Transverse colon (tissue), 4 donors: ENCODE measurements at regions of chr17 and their contacts with region 1.

Region 1: DNA sequence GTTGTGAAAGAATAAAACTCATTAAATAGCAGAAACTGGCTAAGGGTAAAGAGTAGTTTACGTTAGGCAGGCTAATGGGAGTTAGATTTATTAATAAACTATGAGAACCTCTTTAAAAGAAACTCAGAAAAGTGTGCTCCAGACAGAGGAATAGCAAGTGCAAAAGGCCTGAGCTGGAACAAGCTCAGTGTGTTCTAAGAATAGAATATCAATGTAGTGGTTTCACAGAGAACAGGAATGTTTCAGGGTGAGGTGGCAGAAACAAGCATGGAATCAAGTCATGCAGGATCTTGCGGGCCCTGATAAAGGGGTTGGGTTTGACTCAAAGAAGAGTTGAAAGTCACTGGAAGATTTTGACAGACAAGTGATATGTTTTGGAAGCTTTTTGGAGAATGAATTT is 164.0 kb upstream of the HS3ST3A1 start:
- DNase-seq: no peak
- H3K4me3 ChIP-seq: no peak overlapping the region
- H3K27ac ChIP-seq: no peak overlapping the region
- H3K4me1 ChIP-seq: no peaks in the 10 kb centered on the region
- H3K27me3 ChIP-seq: no peaks in the 10 kb centered on the region
- CTCF ChIP-seq: no peak
- EP300 ChIP-seq: no peak
- POLR2A ChIP-seq: no peak

Region 2: GRCh38 chr17:13813347-13814240 is 47.9 kb after region 1 on chr17:
- in situ Hi-C with region 1: no loop called
- intact Hi-C with region 1: loop called (anchors 2 kb)
- DNase-seq: no peak
- H3K4me3 ChIP-seq: no peak overlapping the region
- H3K27ac ChIP-seq: no peak overlapping the region
- H3K4me1 ChIP-seq: no peaks in the 10 kb centered on the region
- H3K27me3 ChIP-seq: no peaks in the 10 kb centered on the region
- CTCF ChIP-seq: no peak
- EP300 ChIP-seq: no peak
- POLR2A ChIP-seq: no peak